HEK293 (cell line): ENCODE measurements at regions of chr5 and their contacts with region 1.

Region 1: GRCh38 chr5:97534166-97534565 is 351.1 kb upstream of the RIOK2 start:
- H3K4me3 ChIP-seq: no peak overlapping the region
- H3K27ac ChIP-seq: no peak overlapping the region
- H3K4me1 ChIP-seq: no peaks in the 10 kb centered on the region
- CTCF ChIP-seq: no peak

Region 2: DNA sequence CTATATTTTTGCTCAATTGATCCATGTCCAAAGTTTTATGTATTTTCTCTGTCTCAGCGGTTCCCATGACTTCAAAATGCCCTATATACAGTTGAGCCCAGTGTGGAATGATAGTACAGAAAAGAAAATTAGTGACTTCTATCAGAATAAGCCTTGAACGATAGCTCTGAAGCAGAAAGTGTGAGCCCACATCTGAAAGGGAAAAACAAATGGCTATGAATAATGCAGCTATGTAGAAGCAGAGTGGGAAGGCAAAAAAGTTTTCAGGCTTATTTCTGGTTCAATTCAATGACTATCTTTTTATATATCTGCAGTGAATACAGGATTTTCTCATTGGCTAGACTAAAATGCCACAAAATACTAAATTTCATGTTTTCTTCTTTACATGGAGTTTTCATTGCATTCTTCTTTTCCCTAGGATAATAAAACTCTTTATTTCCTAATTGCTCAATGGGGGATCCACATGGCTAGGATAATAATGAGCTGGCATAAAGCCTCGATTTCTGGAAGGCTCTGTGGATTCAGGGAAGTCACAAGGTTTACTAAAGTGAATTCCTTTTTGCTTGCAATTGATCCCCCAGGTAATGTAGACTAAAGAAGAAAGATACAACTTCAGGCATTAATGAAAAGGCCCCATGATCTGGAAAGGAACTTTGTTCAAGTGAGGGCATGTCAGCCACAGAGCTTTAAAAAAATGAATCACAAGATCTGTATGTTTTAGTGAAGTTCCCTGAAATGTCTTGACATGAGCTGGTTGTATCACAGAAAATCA is 25.8 kb after region 1 on chr5:
- CTCF ChIA-PET with region 1: interaction called, 11 read pairs
- POLR2A ChIA-PET with region 1: no interaction called
- H3K4me3 ChIP-seq: no peak overlapping the region
- H3K27ac ChIP-seq: no peak overlapping the region
- H3K4me1 ChIP-seq: no peaks in the 10 kb centered on the region
- CTCF ChIP-seq: no peak